ENCODE measurements at regions of chr2 and their contacts with region 1.

Region 1: DNA sequence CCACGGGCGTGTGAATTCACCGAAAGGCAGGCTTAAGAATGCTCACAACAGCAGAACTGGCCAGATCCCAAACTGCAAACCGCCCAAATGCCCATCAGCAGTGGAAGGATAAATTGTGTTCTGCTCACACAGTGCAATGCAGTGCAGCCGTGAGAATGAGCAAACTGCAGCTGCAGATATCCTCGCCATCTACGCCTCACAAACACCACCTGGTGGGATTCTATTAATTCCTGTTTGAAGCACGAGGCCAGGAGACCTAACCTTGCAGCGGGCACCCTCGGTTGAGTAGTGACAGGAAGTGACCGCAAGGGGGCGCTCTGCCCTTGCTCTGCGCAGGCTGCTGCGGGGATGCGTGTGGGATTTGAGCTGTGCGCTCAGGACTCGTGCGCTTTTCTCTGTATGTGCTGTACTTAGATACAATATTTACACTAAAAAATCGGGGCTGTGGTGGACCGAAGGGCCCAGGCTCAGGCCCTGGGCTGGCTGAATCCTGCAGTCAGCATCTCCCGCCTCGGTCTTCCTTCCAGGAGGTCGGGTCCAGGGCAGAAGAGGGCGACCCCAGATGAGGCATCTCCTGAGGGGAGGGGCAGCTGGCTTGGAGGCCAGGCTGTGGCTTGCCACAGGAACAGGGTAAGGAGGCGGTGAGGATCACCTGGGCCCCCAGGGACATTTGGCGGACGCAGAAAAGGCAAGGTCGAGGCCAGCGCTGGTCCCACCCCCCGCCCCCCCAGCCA is 19.8 kb upstream of the PDIA6 start:
- DNase-seq: peak; percentile 85 to 87 (median 86)
- ATAC-seq: peak; percentile 92
- H3K4me3 ChIP-seq: no peak overlapping the region
- H3K27ac ChIP-seq: no peak overlapping the region
- H3K4me1 ChIP-seq: peaks cover 0 to 13% of the 10 kb centered on the region in 2 experiments; a peak in 3 of 5 replicates
- H3K27me3 ChIP-seq: peaks cover 38 to 54% of the 10 kb centered on the region in 2 experiments
- CTCF ChIP-seq: peak; percentile 95 to 97 (median 97)
- EP300 ChIP-seq: no peak
- POLR2A ChIP-seq: no peak
- RAD21 ChIP-seq: peak; percentile 84 to 93

Region 2: GRCh38 chr2:10900216-10901109 is 68.1 kb after region 1 on chr2:
- CTCF ChIA-PET with region 1: no interaction called
- POLR2A ChIA-PET with region 1: no interaction called
- in situ Hi-C with region 1: no loop called
- intact Hi-C with region 1: loop called (anchors 2 kb)
- DNase-seq: peak; percentile 40 to 52 (median 46)
- ATAC-seq: peak; percentile 84
- H3K4me3 ChIP-seq: no peak overlapping the region
- H3K27ac ChIP-seq: no peak overlapping the region
- H3K4me1 ChIP-seq: no peaks in the 10 kb centered on the region
- H3K27me3 ChIP-seq: peaks cover 7 to 14% of the 10 kb centered on the region in 2 experiments; a peak in 4 of 5 replicates
- CTCF ChIP-seq: peak; percentile 46 to 59 (median 59); a peak in 4 of 6 replicates
- EP300 ChIP-seq: no peak
- POLR2A ChIP-seq: no peak
- RAD21 ChIP-seq: peak in 1 of 2 experiments; percentile 41; a peak in 2 of 4 replicates

Region 3: GRCh38 chr2:10910654-10911053 is 78.3 kb after region 1 on chr2:
- CTCF ChIA-PET with region 1: no interaction called
- POLR2A ChIA-PET with region 1: no interaction called
- in situ Hi-C with region 1: no loop called
- intact Hi-C with region 1: no loop called
- DNase-seq: no peak
- ATAC-seq: no peak
- H3K4me3 ChIP-seq: no peak overlapping the region
- H3K27ac ChIP-seq: no peak overlapping the region
- H3K4me1 ChIP-seq: peaks cover 0 to 12% of the 10 kb centered on the region in 2 experiments; a peak in 1 of 5 replicates
- H3K27me3 ChIP-seq: peaks cover 37 to 87% of the 10 kb centered on the region in 2 experiments; a peak in 4 of 5 replicates
- CTCF ChIP-seq: no peak
- EP300 ChIP-seq: no peak
- POLR2A ChIP-seq: no peak
- RAD21 ChIP-seq: no peak

Region 4: DNA sequence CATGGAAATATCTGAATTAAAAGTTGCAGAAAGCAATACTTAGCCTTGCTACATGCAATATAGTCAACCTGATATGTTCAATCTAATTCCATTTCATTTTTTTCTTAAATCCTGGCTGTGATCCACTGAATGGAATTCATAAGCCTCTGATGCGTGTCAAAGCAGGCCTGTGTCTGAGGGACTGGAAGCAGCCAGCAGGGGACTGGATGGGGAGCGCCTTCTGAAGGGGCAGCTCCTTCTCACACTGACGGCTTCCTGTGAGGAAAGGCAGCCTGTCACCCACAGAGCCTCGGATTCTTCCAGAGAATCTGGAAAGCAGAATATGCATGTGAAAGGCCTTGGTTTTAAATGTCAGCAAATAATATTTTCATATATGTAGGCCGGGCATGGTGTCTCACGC is 152.9 kb after region 1 on chr2:
- CTCF ChIA-PET with region 1: no interaction called
- POLR2A ChIA-PET with region 1: no interaction called
- in situ Hi-C with region 1: no loop called
- intact Hi-C with region 1: no loop called
- DNase-seq: no peak
- ATAC-seq: no peak
- H3K4me3 ChIP-seq: no peak overlapping the region
- H3K27ac ChIP-seq: no peak overlapping the region
- H3K4me1 ChIP-seq: no peaks in the 10 kb centered on the region
- H3K27me3 ChIP-seq: peaks cover 16 to 48% of the 10 kb centered on the region in 2 experiments; a peak in 4 of 5 replicates
- CTCF ChIP-seq: no peak
- EP300 ChIP-seq: no peak
- POLR2A ChIP-seq: no peak
- RAD21 ChIP-seq: no peak

Region 5: GRCh38 chr2:11124503-11125068 is 292.2 kb after region 1 on chr2:
- CTCF ChIA-PET with region 1: interaction called, 32 read pairs
- POLR2A ChIA-PET with region 1: interaction called, 4 read pairs
- in situ Hi-C with region 1: loop called (anchors 5 kb)
- intact Hi-C with region 1: loop called (anchors 1 kb)
- DNase-seq: peak; percentile 70 to 86 (median 80)
- ATAC-seq: peak; percentile 86
- H3K4me3 ChIP-seq: no peak overlapping the region
- H3K27ac ChIP-seq: no peak overlapping the region
- H3K4me1 ChIP-seq: peaks cover 10 to 16% of the 10 kb centered on the region in 2 experiments; a peak in 3 of 5 replicates
- H3K27me3 ChIP-seq: peaks cover 3 to 60% of the 10 kb centered on the region in 2 experiments; a peak in 3 of 5 replicates
- CTCF ChIP-seq: peak; percentile 88 to 90 (median 90)
- EP300 ChIP-seq: no peak
- POLR2A ChIP-seq: no peak
- RAD21 ChIP-seq: peak; percentile 87 to 93

Region 6: DNA sequence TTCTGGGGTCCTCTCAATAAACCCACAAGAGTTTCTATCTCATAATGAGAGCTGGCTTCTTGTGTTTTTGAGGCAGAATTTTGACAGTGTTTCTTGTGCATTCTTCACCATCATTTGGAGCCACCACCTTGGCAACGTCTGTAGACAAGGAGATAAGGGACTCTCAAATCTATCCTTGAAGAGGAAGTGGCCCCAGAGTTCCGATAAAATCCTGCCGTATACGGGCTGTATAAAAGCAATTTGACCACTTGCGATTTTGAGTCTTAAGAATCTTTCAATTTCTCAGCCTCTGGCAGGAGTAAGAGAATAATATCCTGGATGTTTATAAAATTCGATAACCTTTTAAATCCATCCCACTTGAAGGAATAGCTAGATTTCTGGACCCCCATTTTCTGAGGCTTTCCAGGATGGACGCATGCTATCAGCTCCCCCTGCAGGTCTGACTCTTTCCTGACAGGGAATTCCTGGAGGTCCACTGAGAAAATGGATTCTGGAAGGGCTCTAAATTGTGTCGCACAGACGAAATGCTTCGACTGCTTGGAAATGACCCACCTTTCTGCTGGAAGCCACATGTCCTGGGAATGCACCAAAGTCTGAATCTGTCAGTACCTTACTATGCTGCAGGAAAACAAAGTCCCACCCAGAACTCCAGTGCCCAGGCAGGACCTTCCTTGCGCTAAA is 579.5 kb after region 1 on chr2:
- CTCF ChIA-PET with region 1: no interaction called
- POLR2A ChIA-PET with region 1: no interaction called
- in situ Hi-C with region 1: loop called (anchors 25 kb)
- intact Hi-C with region 1: loop called (anchors 10 kb)
- DNase-seq: peak; percentile 51 to 66 (median 57)
- ATAC-seq: peak; percentile 77
- H3K4me3 ChIP-seq: peak overlapping the region; percentile 5; the same call in 1 of the 2 replicates
- H3K27ac ChIP-seq: no peak overlapping the region
- H3K4me1 ChIP-seq: peaks cover 3 to 17% of the 10 kb centered on the region in 2 experiments; a peak in 4 of 5 replicates
- H3K27me3 ChIP-seq: no peaks in the 10 kb centered on the region
- CTCF ChIP-seq: peak; percentile 72 to 84 (median 79)
- EP300 ChIP-seq: 0 out of 2 replicates have a peak, but pooled peaks have one; percentile 25
- POLR2A ChIP-seq: no peak
- RAD21 ChIP-seq: peak; percentile 83 to 90

Region 7: GRCh38 chr2:11681722-11682589 is 849.6 kb after region 1 on chr2:
- CTCF ChIA-PET with region 1: interaction called, 3 read pairs
- POLR2A ChIA-PET with region 1: no interaction called
- in situ Hi-C with region 1: no loop called
- intact Hi-C with region 1: loop called (anchors 5 kb)
- DNase-seq: peak; percentile 71 to 91 (median 89)
- ATAC-seq: peak; percentile 93
- H3K4me3 ChIP-seq: no peak overlapping the region
- H3K27ac ChIP-seq: no peak overlapping the region
- H3K4me1 ChIP-seq: peaks cover 0 to 7% of the 10 kb centered on the region in 2 experiments; a peak in 2 of 5 replicates
- H3K27me3 ChIP-seq: peaks cover 26 to 80% of the 10 kb centered on the region in 2 experiments; a peak in 3 of 5 replicates
- CTCF ChIP-seq: peak; percentile 92 to 97 (median 92)
- EP300 ChIP-seq: no peak
- POLR2A ChIP-seq: no peak
- RAD21 ChIP-seq: peak; percentile 73 to 87